Activated CD8-positive, alpha-beta T cell treated with anti-CD3 and anti-CD28 coated beads for 36 hours (primary cell): ENCODE measurements at regions of chr3 and their contacts with region 1.

Region 1: GRCh38 chr3:124032648-124033359 is 40.9 kb upstream of the ROPN1 start:
- DNase-seq: peak; percentile 70
- ATAC-seq: peak; percentile 88
- H3K4me3 Mint-ChIP-seq: peak overlapping the region; percentile 58
- H3K27ac Mint-ChIP-seq: no peak overlapping the region
- H3K4me1 Mint-ChIP-seq: peaks cover 10% of the 10 kb centered on the region
- H3K27me3 Mint-ChIP-seq: peaks cover 43% of the 10 kb centered on the region
- CTCF ChIP-seq: peak; percentile 86

Region 2: GRCh38 chr3:123791898-123792297 is 240.9 kb before region 1 on chr3:
- CTCF ChIA-PET with region 1: no interaction called
- POLR2A ChIA-PET with region 1: no interaction called
- intact Hi-C with region 1: no loop called
- DNase-seq: no peak
- ATAC-seq: no peak
- H3K4me3 Mint-ChIP-seq: no peak overlapping the region
- H3K27ac Mint-ChIP-seq: no peak overlapping the region
- H3K4me1 Mint-ChIP-seq: no peaks in the 10 kb centered on the region
- H3K27me3 Mint-ChIP-seq: peaks cover 2% of the 10 kb centered on the region
- CTCF ChIP-seq: no peak

Region 3: DNA sequence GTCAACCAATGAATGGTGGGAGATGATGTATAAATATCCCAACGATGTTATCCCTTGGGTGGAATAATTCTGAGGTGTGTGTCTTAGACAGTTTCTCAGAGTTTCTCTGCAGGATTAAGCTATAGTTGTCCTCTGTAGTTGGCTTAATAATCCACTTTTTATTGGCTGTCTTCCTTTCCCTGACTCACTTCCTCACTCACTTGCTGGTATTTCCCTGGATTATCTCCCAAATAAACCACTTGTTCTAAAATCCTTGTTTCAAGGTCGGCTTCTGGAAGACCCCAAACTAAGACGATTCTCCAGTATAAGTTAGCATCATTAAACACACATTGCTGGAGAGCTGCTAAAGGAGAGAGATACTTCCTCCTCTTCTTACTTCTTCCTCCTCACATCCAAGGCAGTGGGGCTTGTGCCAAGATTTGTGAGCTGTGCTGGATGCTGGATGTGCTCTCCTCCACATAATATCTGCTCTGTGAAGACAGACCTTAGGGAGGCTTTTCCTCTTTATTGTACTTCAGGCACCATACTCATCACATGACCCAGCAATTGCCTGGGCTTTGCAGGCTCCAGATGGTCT is 18.4 kb before region 1 on chr3:
- CTCF ChIA-PET with region 1: interaction called, 13 read pairs
- POLR2A ChIA-PET with region 1: no interaction called
- intact Hi-C with region 1: no loop called
- DNase-seq: no peak
- ATAC-seq: no peak
- H3K4me3 Mint-ChIP-seq: no peak overlapping the region
- H3K27ac Mint-ChIP-seq: no peak overlapping the region
- H3K4me1 Mint-ChIP-seq: no peaks in the 10 kb centered on the region
- H3K27me3 Mint-ChIP-seq: peaks cover 29% of the 10 kb centered on the region
- CTCF ChIP-seq: no peak

Region 4: GRCh38 chr3:124048931-124049798 is 16.4 kb after region 1 on chr3:
- CTCF ChIA-PET with region 1: interaction called, 14 read pairs
- POLR2A ChIA-PET with region 1: interaction called, 3 read pairs
- intact Hi-C with region 1: no loop called
- DNase-seq: no peak
- ATAC-seq: no peak
- H3K4me3 Mint-ChIP-seq: no peak overlapping the region
- H3K27ac Mint-ChIP-seq: no peak overlapping the region
- H3K4me1 Mint-ChIP-seq: no peaks in the 10 kb centered on the region
- H3K27me3 Mint-ChIP-seq: peaks cover 31% of the 10 kb centered on the region
- CTCF ChIP-seq: no peak

Region 5: GRCh38 chr3:124078953-124079911 is 46.4 kb after region 1 on chr3:
- CTCF ChIA-PET with region 1: interaction called, 23 read pairs
- POLR2A ChIA-PET with region 1: no interaction called
- intact Hi-C with region 1: no loop called
- DNase-seq: peak; percentile 37
- ATAC-seq: no peak
- H3K4me3 Mint-ChIP-seq: no peak overlapping the region
- H3K27ac Mint-ChIP-seq: no peak overlapping the region
- H3K4me1 Mint-ChIP-seq: no peaks in the 10 kb centered on the region
- H3K27me3 Mint-ChIP-seq: peaks cover 11% of the 10 kb centered on the region
- CTCF ChIP-seq: peak; percentile 66